GM12878 (cell line): ENCODE measurements at regions of chr17 and their contacts with region 1.

Region 1: GRCh38 chr17:58200017-58200633 is 7.6 kb downstream of the EPX start:
- DNase-seq: no peak
- ATAC-seq: peak; percentile 99
- H3K4me3 ChIP-seq: no peak overlapping the region
- H3K27ac ChIP-seq: no peak overlapping the region
- H3K4me1 ChIP-seq: no peaks in the 10 kb centered on the region
- H3K27me3 ChIP-seq: peaks cover 0 to 4% of the 10 kb centered on the region in 2 experiments; a peak in 2 of 4 replicates
- CTCF ChIP-seq: peak; percentile 62 to 78 (median 77)
- EP300 ChIP-seq: no peak
- POLR2A ChIP-seq: no peak
- RAD21 ChIP-seq: peak; percentile 36; the same call in 1 of the 2 replicates

Region 2: GRCh38 chr17:58082870-58083490 is 117.1 kb before region 1 on chr17 and contains the start of gene DYNLL2:
- CTCF ChIA-PET with region 1: no interaction called
- POLR2A ChIA-PET with region 1: no interaction called
- RAD21 ChIA-PET with region 1: no interaction called
- SMC1A ChIA-PET with region 1: no interaction called
- in situ Hi-C with region 1: no loop called
- intact Hi-C with region 1: no loop called
- DNase-seq: peak; percentile 25
- ATAC-seq: peak; percentile 87
- H3K4me3 ChIP-seq: peak within 1 kb of the TSS; percentile 78
- H3K27ac ChIP-seq: peak within 1 kb of the TSS; percentile 76
- H3K4me1 ChIP-seq: peaks cover 15% of the 10 kb centered on the region
- H3K27me3 ChIP-seq: peaks cover 0 to 9% of the 10 kb centered on the region in 2 experiments; a peak in 1 of 4 replicates
- CTCF ChIP-seq: no peak
- EP300 ChIP-seq: no peak
- POLR2A ChIP-seq: no peak
- RAD21 ChIP-seq: no peak
- polyA plus RNA-seq, gene DYNLL2: 1.9 to 2.8 TPM

Region 3: DNA sequence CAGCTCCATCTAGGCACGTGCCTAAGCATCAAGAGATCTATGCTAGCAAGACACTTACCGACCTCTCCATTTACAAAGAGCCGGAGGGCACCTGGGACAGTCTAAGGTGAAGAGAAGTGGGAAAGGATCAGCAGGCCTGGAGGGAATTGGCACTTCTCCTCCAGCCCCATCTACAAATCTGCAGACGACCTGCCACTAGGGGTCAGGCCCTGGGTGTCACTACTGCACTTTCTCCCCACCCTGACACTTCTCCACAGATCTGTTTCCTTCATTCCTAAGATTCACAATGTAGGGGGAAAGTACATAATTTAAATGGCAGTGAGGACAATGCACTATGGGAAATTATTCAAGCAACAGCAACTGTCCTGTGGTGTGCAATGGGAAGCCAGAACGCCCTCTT is 10.8 kb after region 1 on chr17:
- CTCF ChIA-PET with region 1: interaction called, 29 read pairs
- POLR2A ChIA-PET with region 1: interaction called, 3 read pairs
- RAD21 ChIA-PET with region 1: interaction called, 3 read pairs
- SMC1A ChIA-PET with region 1: interaction called, 7 read pairs
- in situ Hi-C with region 1: no loop called
- intact Hi-C with region 1: no loop called
- DNase-seq: no peak
- ATAC-seq: no peak
- H3K4me3 ChIP-seq: no peak overlapping the region
- H3K27ac ChIP-seq: no peak overlapping the region
- H3K4me1 ChIP-seq: no peaks in the 10 kb centered on the region
- H3K27me3 ChIP-seq: no peaks in the 10 kb centered on the region
- CTCF ChIP-seq: peak; percentile 28 to 45 (median 44); a peak in 4 of 6 replicates
- EP300 ChIP-seq: no peak
- POLR2A ChIP-seq: no peak
- RAD21 ChIP-seq: no peak

Region 4: DNA sequence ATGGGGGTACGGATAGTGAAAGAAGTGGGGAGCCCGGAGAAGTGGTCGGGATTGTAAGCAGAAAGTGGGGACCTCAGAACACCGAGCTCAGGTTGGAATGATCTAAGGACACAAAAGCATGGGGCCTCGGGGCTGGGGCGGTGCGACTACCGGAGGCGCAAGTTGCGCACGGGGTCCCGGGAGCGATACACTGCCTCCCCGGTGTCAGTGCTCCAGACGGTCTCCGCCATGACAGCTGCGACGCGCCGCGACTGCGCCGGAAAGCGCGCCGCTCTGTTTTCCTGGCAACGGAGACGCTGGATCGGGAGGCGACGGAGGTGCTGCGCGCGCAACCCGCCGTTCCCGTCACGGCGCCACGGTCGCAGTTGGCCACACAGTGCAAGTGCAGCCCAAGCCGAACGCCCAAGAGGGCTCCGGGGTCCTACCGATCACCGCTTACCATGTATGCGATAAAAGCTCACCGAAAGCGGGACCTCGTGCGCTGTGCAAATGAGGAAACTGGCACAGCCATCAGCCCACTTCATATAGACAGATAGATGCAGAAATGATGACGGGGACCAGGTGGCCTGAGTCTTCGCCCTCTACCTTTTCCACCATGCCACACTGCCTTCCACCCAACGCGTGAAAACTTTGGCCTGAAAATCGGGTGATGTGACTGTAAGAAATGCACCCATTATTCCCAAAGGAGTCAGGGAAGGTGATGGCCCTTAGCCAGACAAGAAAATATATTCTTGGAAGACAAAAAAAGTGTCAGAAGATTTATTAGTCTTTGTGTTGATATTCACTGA is 19.1 kb after region 1 on chr17 and contains the start of gene MKS1:
- CTCF ChIA-PET with region 1: interaction called, 29 read pairs
- POLR2A ChIA-PET with region 1: interaction called, 3 read pairs
- RAD21 ChIA-PET with region 1: interaction called, 4 read pairs
- SMC1A ChIA-PET with region 1: interaction called, 7 read pairs
- in situ Hi-C with region 1: no loop called
- intact Hi-C with region 1: no loop called
- DNase-seq: peak; percentile 84
- ATAC-seq: peak; percentile 100
- H3K4me3 ChIP-seq: peak within 1 kb of the TSS; percentile 69
- H3K27ac ChIP-seq: peak within 1 kb of the TSS; percentile 63
- H3K4me1 ChIP-seq: peaks cover 12% of the 10 kb centered on the region
- H3K27me3 ChIP-seq: no peaks in the 10 kb centered on the region
- CTCF ChIP-seq: peak; percentile 73 to 83 (median 78)
- EP300 ChIP-seq: peak; percentile 14 to 34; a peak in 1 of 4 replicates
- POLR2A ChIP-seq: peak; percentile 94
- RAD21 ChIP-seq: 0 out of 2 replicates have a peak, but pooled peaks have one; percentile 6
- polyA plus RNA-seq, gene MKS1: 5.7 to 7.2 TPM

Region 5: DNA sequence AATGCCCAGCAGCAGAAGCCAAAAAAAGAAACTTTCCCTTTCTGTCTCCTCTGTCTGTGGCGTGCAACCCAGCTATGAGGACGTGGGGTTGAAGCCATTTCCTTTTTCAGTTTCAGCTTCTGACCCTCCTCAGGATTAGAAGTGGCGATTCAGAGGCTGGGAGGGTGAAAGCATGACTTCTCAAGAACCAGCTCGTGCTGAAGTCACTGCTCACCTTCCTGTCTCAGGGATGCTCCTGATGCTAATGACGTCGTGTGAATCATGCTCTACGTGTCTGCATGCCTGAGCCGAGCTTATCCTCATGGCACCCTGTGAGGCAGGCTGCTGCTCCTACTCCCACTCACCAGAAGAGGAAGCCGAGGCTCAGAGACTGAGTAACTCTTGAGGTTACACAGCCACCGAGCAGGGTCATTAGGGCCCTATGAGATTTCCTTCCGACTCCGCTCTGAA is 32.6 kb after region 1 on chr17:
- CTCF ChIA-PET with region 1: interaction called, 10 read pairs
- POLR2A ChIA-PET with region 1: no interaction called
- RAD21 ChIA-PET with region 1: interaction called, 5 read pairs
- SMC1A ChIA-PET with region 1: interaction called, 16 read pairs
- in situ Hi-C with region 1: no loop called
- intact Hi-C with region 1: no loop called
- DNase-seq: peak; percentile 87
- ATAC-seq: peak; percentile 92
- H3K4me3 ChIP-seq: peak overlapping the region; percentile 11; the same call in 1 of the 2 replicates
- H3K27ac ChIP-seq: peak overlapping the region; percentile 67
- H3K4me1 ChIP-seq: peaks cover 21% of the 10 kb centered on the region
- H3K27me3 ChIP-seq: no peaks in the 10 kb centered on the region; a peak in 1 of 4 replicates
- CTCF ChIP-seq: peak; percentile 6 to 24 (median 20); a peak in 1 of 6 replicates
- EP300 ChIP-seq: 0 out of 4 replicates have a peak, but pooled peaks of 1 of the 2 experiments have one; percentile 19
- POLR2A ChIP-seq: peak; percentile 56
- RAD21 ChIP-seq: 0 out of 2 replicates have a peak, but pooled peaks have one; percentile 12

Region 6: DNA sequence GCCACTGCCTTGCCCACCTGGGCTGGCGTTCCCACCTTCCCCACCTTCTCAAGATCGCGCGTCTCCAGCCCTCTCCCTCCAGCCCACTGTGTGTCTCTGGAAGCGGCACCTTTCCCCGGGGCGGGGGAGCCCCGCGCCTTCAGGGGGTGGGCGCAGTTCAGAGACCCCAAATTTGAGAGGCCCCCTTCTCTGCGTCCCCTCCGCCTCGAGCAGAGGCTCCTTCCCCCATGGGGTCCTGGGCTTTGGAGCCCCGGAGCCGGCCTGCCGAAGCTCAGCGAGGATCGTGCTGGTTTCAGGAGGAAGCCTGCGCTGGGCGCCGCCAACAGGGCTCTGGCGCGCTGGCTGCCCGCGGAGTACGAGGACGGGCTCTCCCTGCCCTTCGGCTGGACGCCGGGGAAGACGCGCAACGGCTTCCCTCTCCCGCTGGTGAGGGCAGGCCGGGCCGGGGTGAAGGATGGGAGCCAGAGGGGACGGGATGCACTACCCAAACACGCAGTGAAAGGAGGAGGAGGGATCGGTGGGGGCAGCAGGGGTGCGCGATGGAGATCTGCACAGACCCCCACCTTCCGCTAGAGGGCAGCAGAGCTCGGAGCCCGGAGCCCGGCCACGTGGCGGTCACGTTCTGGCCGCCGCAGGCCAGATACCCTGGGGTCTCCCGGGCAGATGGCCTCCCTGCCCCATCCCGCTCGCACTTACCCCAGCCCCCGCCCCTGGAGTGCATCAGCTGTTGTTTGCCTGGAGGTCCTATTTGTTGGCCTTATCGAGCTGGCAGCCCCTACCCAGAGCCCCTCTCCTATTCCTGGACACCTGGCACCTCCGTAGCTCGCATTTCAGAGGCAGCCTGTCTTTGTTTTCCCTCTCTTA is 49.4 kb after region 1 on chr17:
- CTCF ChIA-PET with region 1: interaction called, 29 read pairs
- POLR2A ChIA-PET with region 1: no interaction called
- RAD21 ChIA-PET with region 1: interaction called, 23 read pairs
- SMC1A ChIA-PET with region 1: interaction called, 10 read pairs
- in situ Hi-C with region 1: no loop called
- intact Hi-C with region 1: loop called (anchors 2 kb)
- DNase-seq: no peak
- ATAC-seq: peak; percentile 97
- H3K4me3 ChIP-seq: peak overlapping the region; percentile 68; the same call in 1 of the 2 replicates
- H3K27ac ChIP-seq: no peak overlapping the region
- H3K4me1 ChIP-seq: peaks cover 6% of the 10 kb centered on the region
- H3K27me3 ChIP-seq: no peaks in the 10 kb centered on the region; a peak in 2 of 4 replicates
- CTCF ChIP-seq: peak; percentile 82 to 95 (median 87)
- EP300 ChIP-seq: no peak
- POLR2A ChIP-seq: no peak
- RAD21 ChIP-seq: peak; percentile 49

Region 7: GRCh38 chr17:58254803-58255388 is 54.8 kb after region 1 on chr17:
- CTCF ChIA-PET with region 1: interaction called, 29 read pairs
- POLR2A ChIA-PET with region 1: no interaction called
- RAD21 ChIA-PET with region 1: interaction called, 23 read pairs
- SMC1A ChIA-PET with region 1: interaction called, 10 read pairs
- in situ Hi-C with region 1: no loop called
- intact Hi-C with region 1: no loop called
- DNase-seq: no peak
- ATAC-seq: no peak
- H3K4me3 ChIP-seq: no peak overlapping the region
- H3K27ac ChIP-seq: no peak overlapping the region
- H3K4me1 ChIP-seq: peaks cover 2% of the 10 kb centered on the region
- H3K27me3 ChIP-seq: no peaks in the 10 kb centered on the region; a peak in 1 of 4 replicates
- CTCF ChIP-seq: peak in 1 of 3 experiments; percentile 25; a peak in 2 of 6 replicates
- EP300 ChIP-seq: no peak
- POLR2A ChIP-seq: no peak
- RAD21 ChIP-seq: no peak

Region 8: DNA sequence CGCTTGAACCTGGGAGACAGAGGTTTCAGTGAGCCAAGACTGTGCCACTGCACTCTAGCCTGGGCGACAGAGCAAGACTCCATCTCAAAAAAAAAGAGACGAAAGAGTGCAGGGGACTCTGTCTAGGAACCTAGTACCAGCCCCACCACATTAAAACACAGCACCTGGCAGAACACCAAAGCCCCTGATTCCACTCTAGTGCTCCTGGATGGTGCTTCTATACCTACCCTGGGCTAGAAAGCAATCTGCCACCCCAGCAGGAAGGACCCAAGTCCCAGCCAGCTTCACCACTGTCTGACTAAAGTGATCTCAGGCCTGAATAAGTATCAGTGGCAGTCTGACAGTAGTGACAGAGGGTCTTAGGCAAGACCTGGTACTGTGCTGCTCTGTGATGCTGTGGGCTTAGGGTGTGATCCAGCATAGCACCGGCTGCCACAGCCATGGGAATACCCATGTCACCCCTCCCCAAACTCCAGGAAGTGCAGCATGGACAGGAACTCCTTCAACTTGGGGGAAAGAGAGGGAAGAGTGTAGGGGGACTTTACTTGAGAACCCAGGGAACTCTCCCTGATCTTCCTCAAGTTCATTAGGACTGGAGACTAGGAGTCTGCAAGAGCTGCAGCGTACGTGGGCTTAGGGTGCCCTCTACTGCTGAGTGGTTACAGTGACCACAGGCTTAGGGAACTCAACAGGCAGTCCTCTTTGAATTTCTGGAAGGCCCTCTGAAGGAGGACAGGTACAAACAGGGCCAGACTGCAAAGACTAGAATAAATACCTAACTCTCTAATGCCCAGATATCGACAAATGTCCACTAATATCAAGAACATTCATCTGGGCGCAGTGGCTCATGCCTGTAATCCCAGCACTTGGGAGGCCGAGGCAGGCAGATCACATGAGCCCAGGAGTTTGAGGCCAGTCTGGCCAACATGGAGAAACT is 247.2 kb after region 1 on chr17:
- CTCF ChIA-PET with region 1: interaction called, 40 read pairs
- POLR2A ChIA-PET with region 1: interaction called, 5 read pairs
- RAD21 ChIA-PET with region 1: interaction called, 9 read pairs
- SMC1A ChIA-PET with region 1: interaction called, 7 read pairs
- in situ Hi-C with region 1: no loop called
- intact Hi-C with region 1: loop called (anchors 1 kb)
- DNase-seq: peak; percentile 53
- ATAC-seq: peak; percentile 99
- H3K4me3 ChIP-seq: no peak overlapping the region
- H3K27ac ChIP-seq: no peak overlapping the region
- H3K4me1 ChIP-seq: no peaks in the 10 kb centered on the region
- H3K27me3 ChIP-seq: no peaks in the 10 kb centered on the region
- CTCF ChIP-seq: peak; percentile 84 to 93 (median 88); a peak in 5 of 6 replicates
- EP300 ChIP-seq: no peak
- POLR2A ChIP-seq: no peak
- RAD21 ChIP-seq: peak; percentile 99